Right lobe of liver (tissue), 6 donors: ENCODE measurements at regions of chr1 and their contacts with region 1.

Region 1: DNA sequence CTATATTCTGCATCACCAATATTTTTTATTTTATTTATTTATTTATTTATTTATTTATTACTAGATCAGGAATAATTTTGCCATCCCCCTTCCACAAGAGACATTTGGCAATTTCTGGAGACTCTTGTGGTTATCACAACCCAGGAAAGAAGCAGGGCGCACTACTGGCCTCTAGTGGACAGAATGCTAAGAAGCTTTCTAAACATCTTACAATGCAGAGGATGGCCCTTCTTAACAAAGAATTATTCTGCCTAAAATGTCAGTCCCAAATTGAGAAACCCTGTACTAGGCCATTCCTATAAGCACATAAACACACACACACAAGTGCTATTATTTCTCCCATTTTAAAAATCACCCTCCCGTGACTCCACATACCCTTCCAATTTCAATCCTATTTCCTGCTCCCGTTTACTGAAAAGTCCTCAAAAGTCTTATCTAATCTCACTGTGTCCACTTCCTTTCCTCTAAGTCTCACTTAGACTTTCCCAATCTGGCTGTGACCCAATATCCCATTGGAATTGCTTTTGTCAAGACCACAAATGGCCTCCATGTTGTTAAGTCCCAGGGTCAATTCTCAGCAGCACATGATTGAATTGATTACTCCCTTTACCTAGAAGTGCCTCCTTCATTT is 43.7 kb upstream of the RNF11 start:
- DNase-seq: peak in 2 of 3 donors; percentile 38 to 55
- ATAC-seq: peak; percentile 73 to 82 (median 79)
- H3K4me3 ChIP-seq: no peak overlapping the region
- H3K27ac ChIP-seq: no peak overlapping the region
- H3K4me1 ChIP-seq: no peaks in the 10 kb centered on the region
- H3K27me3 ChIP-seq: no peaks in the 10 kb centered on the region
- CTCF ChIP-seq: peak; percentile 61 to 88 (median 82)
- POLR2A ChIP-seq: no peak

Region 2: GRCh38 chr1:51296383-51297357 is 104.3 kb after region 1 on chr1:
- intact Hi-C with region 1: loop called in 1 of 2 experiments (anchors 10 kb)
- DNase-seq: peak; percentile 79 to 83 (median 82)
- ATAC-seq: peak; percentile 89 to 95 (median 92)
- H3K4me3 ChIP-seq: peak overlapping the region; percentile 27 to 57 (median 36)
- H3K27ac ChIP-seq: no peak overlapping the region
- H3K4me1 ChIP-seq: peaks cover 0 to 5% (median 0%) of the 10 kb centered on the region in 4 donors
- H3K27me3 ChIP-seq: no peaks in the 10 kb centered on the region
- CTCF ChIP-seq: peak; percentile 93 to 96 (median 95)
- POLR2A ChIP-seq: no peak